ENCODE measurements at regions of chr7 and their contacts with region 1.

Region 1: GRCh38 chr7:130205084-130205947 is at the start of gene TMEM209:
- DNase-seq: peak; percentile 93
- H3K4me3 Mint-ChIP-seq: peak within 1 kb of the TSS; percentile 95
- H3K27ac Mint-ChIP-seq: peak within 1 kb of the TSS; percentile 97
- H3K4me1 Mint-ChIP-seq: peaks cover 32% of the 10 kb centered on the region
- H3K27me3 Mint-ChIP-seq: no peaks in the 10 kb centered on the region
- total RNA-seq, gene TMEM209: 47.4 and 55.0 TPM in 2 replicates

Region 2: DNA sequence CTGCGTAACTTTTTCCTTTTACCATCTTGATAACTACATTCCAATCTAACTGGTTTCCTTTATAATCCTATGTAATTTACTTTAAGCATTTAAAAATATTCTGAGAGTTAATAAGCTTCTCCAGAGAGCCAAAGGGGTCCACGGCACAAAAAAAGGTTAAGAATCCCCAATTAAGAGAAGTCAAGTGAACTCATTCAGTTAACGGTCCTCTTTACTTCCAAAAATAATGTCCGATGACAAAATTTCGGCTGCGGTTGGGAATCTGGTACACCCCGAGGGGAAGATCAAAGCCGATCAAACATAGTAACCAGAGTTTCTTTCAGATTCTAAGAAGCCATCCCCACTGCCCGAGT is 154.6 kb before region 1 on chr7:
- intact Hi-C with region 1: loop called (anchors 1 kb)
- DNase-seq: no peak
- H3K4me3 Mint-ChIP-seq: peak overlapping the region; percentile 99
- H3K27ac Mint-ChIP-seq: peak overlapping the region; percentile 97
- H3K4me1 Mint-ChIP-seq: peaks cover 13% of the 10 kb centered on the region
- H3K27me3 Mint-ChIP-seq: peaks cover 3% of the 10 kb centered on the region

Region 3: GRCh38 chr7:130180571-130181262 is 24.6 kb before region 1 on chr7:
- intact Hi-C with region 1: loop called (anchors 1 kb)
- DNase-seq: no peak
- H3K4me3 Mint-ChIP-seq: peak overlapping the region; percentile 15
- H3K27ac Mint-ChIP-seq: peak overlapping the region; percentile 92
- H3K4me1 Mint-ChIP-seq: peaks cover 36% of the 10 kb centered on the region
- H3K27me3 Mint-ChIP-seq: no peaks in the 10 kb centered on the region

Region 4: GRCh38 chr7:130277763-130278643 is 72.7 kb after region 1 on chr7:
- intact Hi-C with region 1: loop called (anchors 1 kb)
- DNase-seq: no peak
- H3K4me3 Mint-ChIP-seq: no peak overlapping the region
- H3K27ac Mint-ChIP-seq: peak overlapping the region; percentile 73
- H3K4me1 Mint-ChIP-seq: peaks cover 24% of the 10 kb centered on the region
- H3K27me3 Mint-ChIP-seq: peaks cover 2% of the 10 kb centered on the region

Region 5: GRCh38 chr7:130668257-130669084 is 463.2 kb after region 1 on chr7 and contains the start of gene COPG2:
- intact Hi-C with region 1: loop called (anchors 1 kb)
- DNase-seq: peak; percentile 76
- H3K4me3 Mint-ChIP-seq: peak within 1 kb of the TSS; percentile 88
- H3K27ac Mint-ChIP-seq: peak within 1 kb of the TSS; percentile 41
- H3K4me1 Mint-ChIP-seq: peaks cover 22% of the 10 kb centered on the region
- H3K27me3 Mint-ChIP-seq: no peaks in the 10 kb centered on the region
- total RNA-seq, gene COPG2: 19.3 and 20.9 TPM in 2 replicates

Measured in activated T-helper 1 cell treated with anti-CD3 and anti-CD28 coated beads, Interleukin-12 subunit alpha, Interleukin-12 subunit beta, Interleukin-2, Interleukin-4 antibody, amounts not matched to agents 30 ng/mL and 10 ng/mL and 1 ng/mL, durations not matched to agents 14 hours and 24 hours and 36 hours (primary cell).